CD8-positive, alpha-beta memory T cell (primary cell): ENCODE measurements at regions of chr17 and their contacts with region 1.

Region 1: DNA sequence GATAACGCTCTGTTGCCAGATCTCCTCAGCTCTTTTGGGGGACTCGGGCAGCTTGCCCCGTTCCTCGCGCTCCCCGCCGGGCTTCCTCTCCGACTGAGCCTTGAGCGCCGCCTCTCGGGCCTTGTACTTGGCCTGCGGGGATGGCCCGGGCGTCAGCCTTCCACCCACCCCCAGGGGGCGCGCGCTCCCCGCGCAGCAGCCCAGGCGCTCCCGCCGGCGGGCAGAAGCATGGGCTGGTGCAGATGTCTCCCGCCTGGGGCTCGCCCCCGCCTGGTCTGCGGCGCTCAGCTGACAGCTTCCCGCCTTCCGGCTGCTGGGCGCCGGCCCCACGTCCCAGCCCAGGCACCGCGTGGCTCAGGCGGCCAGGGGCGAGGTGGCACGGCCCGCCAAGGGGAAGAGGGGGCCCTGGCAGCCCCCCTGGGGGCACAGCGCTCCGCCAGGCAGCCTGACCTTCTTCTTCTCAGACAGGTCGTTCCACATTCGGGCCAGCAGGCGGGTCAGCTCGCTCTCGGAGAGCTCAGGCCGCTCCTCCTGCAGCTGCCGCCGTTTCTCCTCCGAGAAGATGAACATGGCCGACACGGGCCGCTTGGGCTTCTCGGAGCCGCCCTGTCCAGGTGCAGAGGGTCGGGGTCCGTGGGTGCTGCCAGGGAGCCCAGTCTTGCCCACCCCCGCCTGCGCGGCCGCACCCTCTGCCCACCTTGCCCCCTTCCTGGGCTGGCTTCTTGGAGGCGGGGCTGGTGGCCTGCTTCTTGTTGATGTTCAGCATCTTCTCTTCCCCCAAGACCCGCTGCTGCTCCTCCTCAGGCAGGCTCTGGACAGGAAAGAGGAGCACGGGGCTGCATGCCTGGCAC is 8.9 kb downstream of the UBTF start:
- DNase-seq: peak; percentile 87 to 94 (median 91)
- H3K4me3 ChIP-seq: peak overlapping the region; percentile 26
- H3K4me3 Mint-ChIP-seq: peak overlapping the region in 6 of 7 donors; percentile 12 to 57 (median 39)
- H3K27ac ChIP-seq: no peak overlapping the region
- H3K27ac Mint-ChIP-seq: peak overlapping the region; percentile 57 to 96 (median 80)
- H3K4me1 ChIP-seq: peaks cover 51% of the 10 kb centered on the region
- H3K4me1 Mint-ChIP-seq: peaks cover 33 to 58% (median 36%) of the 10 kb centered on the region in 3 donors
- H3K27me3 ChIP-seq: no peaks in the 10 kb centered on the region
- H3K27me3 Mint-ChIP-seq: peaks cover 0 to 3% of the 10 kb centered on the region in 2 donors

Region 2: DNA sequence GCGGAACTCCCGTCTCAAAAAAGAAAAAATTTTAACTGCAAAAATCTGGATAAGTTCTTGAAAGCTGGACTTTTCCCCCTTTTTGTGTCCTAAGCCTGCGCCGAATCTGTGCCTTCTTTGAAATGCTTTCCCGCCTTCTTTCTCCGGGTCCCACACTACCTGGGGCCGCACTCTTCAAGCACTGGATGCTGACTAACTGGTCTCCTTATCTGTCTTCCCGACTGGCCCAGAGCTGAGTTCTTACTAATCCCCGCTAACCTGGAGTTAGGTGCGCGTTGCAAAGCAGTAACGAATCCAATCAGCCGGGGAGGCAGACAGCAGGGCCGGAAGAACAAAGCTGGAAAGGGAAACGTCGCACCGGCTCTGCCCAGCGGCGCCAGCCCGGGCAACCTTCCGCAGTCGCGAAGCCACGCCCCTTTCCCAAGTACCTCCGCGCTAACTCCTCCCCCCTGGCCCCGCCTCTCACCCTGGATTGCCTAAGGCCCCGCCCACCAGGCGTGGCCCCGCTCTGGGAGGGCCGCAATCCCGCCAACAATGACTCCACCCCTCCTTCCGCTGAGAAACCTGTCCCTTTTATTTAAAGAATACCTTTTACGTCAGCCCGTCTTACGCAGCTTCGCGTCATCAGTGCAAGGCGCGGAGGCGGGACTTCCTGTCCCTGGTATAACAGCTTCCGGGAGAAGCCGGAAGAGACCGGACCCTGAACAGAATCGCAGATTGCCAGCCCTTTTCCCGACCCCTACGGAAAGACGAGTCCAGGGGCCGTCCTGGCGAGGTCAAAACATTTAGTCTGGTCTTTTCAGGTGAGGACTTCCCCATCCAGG is 24.0 kb before region 1 on chr17 and contains the start of gene TMUB2:
- CTCF ChIA-PET with region 1: interaction called, 15 read pairs
- POLR2A ChIA-PET with region 1: interaction called, 7 read pairs
- DNase-seq: peak; percentile 99 to 100 (median 99)
- H3K4me3 ChIP-seq: peak within 1 kb of the TSS; percentile 100
- H3K4me3 Mint-ChIP-seq: peak within 1 kb of the TSS; percentile 90 to 100 (median 99)
- H3K27ac ChIP-seq: peak within 1 kb of the TSS; percentile 100
- H3K27ac Mint-ChIP-seq: peak within 1 kb of the TSS; percentile 89 to 100 (median 100)
- H3K4me1 ChIP-seq: peaks cover 35% of the 10 kb centered on the region
- H3K4me1 Mint-ChIP-seq: peaks cover 44 to 58% (median 56%) of the 10 kb centered on the region in 3 donors
- H3K27me3 ChIP-seq: no peaks in the 10 kb centered on the region
- H3K27me3 Mint-ChIP-seq: peaks cover 0 to 2% of the 10 kb centered on the region in 2 donors
- total RNA-seq, gene TMUB2: 20.8 to 22.5 TPM

Region 3: DNA sequence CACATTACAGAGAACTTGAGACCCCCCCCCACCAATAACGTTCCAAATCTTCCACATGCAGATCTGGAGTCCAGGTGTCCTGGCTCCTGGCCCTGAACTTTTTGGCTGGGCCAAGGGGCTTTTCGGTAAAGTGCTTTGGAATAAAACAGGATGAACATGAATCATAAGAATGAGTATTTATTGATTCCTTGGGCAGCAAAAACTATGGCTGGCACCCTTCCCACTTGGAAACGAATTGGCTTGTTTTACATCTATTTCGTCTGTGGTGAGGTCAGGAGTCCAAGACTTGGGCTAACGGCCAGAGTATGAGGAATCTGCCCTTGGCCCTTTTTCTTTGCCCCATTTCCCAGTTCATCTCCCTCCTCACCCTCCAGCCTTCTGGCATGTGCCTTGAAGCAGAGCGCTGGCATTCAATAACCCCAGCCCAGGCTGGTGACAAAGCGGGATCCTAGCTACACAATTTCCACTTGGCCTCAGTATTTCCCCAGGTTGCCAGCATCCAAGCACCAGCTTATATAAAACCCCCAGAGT is 13.0 kb after region 1 on chr17:
- CTCF ChIA-PET with region 1: interaction called, 50 read pairs
- POLR2A ChIA-PET with region 1: interaction called, 58 read pairs
- DNase-seq: no peak
- H3K4me3 ChIP-seq: no peak overlapping the region
- H3K4me3 Mint-ChIP-seq: peak overlapping the region in 2 of 7 donors; percentile 45 to 82
- H3K27ac ChIP-seq: no peak overlapping the region
- H3K27ac Mint-ChIP-seq: peak overlapping the region in 4 of 8 donors; percentile 12 to 99 (median 71)
- H3K4me1 ChIP-seq: peaks cover 8% of the 10 kb centered on the region
- H3K4me1 Mint-ChIP-seq: peaks cover 8 to 14% (median 12%) of the 10 kb centered on the region in 3 donors
- H3K27me3 ChIP-seq: no peaks in the 10 kb centered on the region
- H3K27me3 Mint-ChIP-seq: no peaks in the 10 kb centered on the region

Region 4: DNA sequence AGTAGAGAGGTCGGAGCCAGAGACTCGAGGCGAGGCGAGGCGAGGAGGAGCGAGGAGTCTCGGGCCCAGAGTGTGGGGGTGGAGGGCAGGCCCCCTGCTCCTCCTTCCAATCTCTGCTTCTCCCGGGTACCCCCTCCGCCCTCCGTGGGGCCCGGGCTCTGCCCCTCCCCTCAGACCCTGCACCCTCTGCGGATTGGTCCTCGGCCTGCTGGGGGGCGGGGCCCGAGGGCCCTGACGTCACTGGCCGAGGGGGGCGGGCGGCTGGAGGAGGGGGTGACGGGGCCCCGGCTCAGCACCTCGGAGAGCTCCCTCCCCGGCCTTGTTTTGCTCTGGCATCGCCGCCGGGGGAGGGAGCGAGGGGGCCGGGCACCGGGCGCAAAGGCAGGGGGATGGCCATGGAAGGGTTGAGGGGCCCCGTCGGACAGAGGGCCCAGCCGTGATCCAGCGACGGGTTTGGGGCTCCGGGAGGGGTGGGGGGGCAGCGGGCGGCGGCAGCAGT is 97.8 kb after region 1 on chr17 and contains the start of gene RUNDC3A:
- CTCF ChIA-PET with region 1: interaction called, 13 read pairs
- POLR2A ChIA-PET with region 1: no interaction called
- DNase-seq: peak; percentile 79 to 88 (median 83)
- H3K4me3 ChIP-seq: no peak within 1 kb of the TSS
- H3K4me3 Mint-ChIP-seq: peak within 1 kb of the TSS; percentile 17 to 72 (median 49)
- H3K27ac ChIP-seq: no peak within 1 kb of the TSS
- H3K27ac Mint-ChIP-seq: peak within 1 kb of the TSS in 1 of 8 donors; percentile 79
- H3K4me1 ChIP-seq: peaks cover 16% of the 10 kb centered on the region
- H3K4me1 Mint-ChIP-seq: peaks cover 14 to 28% (median 17%) of the 10 kb centered on the region in 3 donors
- H3K27me3 ChIP-seq: peaks cover 12% of the 10 kb centered on the region
- H3K27me3 Mint-ChIP-seq: peaks cover 28 to 44% of the 10 kb centered on the region in 2 donors
- total RNA-seq, gene RUNDC3A: not detected

Region 5: DNA sequence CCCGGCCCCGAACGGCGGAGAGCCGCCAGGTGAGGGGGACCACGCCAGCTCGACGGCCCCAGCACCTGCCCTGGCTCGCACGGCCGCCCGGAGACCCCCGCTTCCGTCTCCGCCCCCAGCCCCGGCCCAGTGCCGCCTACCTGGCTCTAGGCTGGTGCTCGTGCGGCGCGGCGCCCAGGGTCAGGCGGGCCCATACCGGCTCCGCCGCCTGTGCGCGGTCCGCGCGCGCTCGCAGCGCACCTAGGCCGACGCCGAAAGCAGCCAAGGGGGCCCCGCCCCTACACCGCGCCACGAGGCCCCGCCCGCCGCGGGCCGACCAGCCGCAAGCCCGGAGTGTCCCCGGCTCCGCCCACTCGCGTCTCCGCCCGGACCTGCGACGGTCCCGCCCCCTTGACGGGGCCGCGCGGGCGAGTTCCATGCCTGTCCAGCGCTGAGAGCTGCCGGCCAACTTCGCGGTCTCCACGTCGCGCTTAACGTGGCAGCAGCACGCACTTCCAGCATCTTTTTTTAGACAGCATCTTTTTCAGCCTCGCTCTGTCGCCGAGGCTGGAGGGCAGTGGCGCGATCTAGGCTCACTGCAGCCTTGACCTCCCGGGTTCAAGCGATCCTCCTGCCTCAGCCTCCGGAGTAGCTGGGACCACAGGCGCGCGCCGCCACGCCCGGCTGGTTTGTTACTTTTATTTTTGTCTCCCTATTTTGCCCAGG is 114.2 kb after region 1 on chr17 and contains the start of gene SLC25A39:
- CTCF ChIA-PET with region 1: interaction called, 100 read pairs
- POLR2A ChIA-PET with region 1: interaction called, 41 read pairs
- DNase-seq: peak; percentile 92 to 96 (median 94)
- H3K4me3 ChIP-seq: peak within 1 kb of the TSS; percentile 94
- H3K4me3 Mint-ChIP-seq: peak within 1 kb of the TSS; percentile 91 to 98 (median 92)
- H3K27ac ChIP-seq: peak within 1 kb of the TSS; percentile 93
- H3K27ac Mint-ChIP-seq: peak within 1 kb of the TSS; percentile 92 to 99 (median 97)
- H3K4me1 ChIP-seq: peaks cover 21% of the 10 kb centered on the region
- H3K4me1 Mint-ChIP-seq: peaks cover 26 to 31% (median 30%) of the 10 kb centered on the region in 3 donors
- H3K27me3 ChIP-seq: no peaks in the 10 kb centered on the region
- H3K27me3 Mint-ChIP-seq: peaks cover 0 to 2% of the 10 kb centered on the region in 2 donors
- total RNA-seq, gene SLC25A39: 159 to 174 TPM

Region 6: GRCh38 chr17:44344939-44345453 is 134.4 kb after region 1 on chr17 and contains the start of gene GRN:
- CTCF ChIA-PET with region 1: interaction called, 54 read pairs
- POLR2A ChIA-PET with region 1: interaction called, 9 read pairs
- DNase-seq: peak; percentile 72 to 87 (median 80)
- H3K4me3 ChIP-seq: peak within 1 kb of the TSS; percentile 89
- H3K4me3 Mint-ChIP-seq: peak within 1 kb of the TSS; percentile 91 to 96 (median 93)
- H3K27ac ChIP-seq: peak within 1 kb of the TSS; percentile 47
- H3K27ac Mint-ChIP-seq: peak within 1 kb of the TSS; percentile 13 to 90 (median 72)
- H3K4me1 ChIP-seq: peaks cover 10% of the 10 kb centered on the region
- H3K4me1 Mint-ChIP-seq: peaks cover 20 to 28% (median 21%) of the 10 kb centered on the region in 3 donors
- H3K27me3 ChIP-seq: no peaks in the 10 kb centered on the region
- H3K27me3 Mint-ChIP-seq: peaks cover 8 to 15% of the 10 kb centered on the region in 2 donors
- total RNA-seq, gene GRN: 48.7 to 50.3 TPM